Right ventricle myocardium superior (tissue), 1 donor: ENCODE measurements at regions of chr4 and their contacts with region 1.

Region 1: GRCh38 chr4:55948726-55949474 is at the start of gene CEP135:
- DNase-seq: peak; percentile 96
- ATAC-seq: peak; percentile 99
- total RNA-seq, gene CEP135: 2.8 TPM

Region 2: DNA sequence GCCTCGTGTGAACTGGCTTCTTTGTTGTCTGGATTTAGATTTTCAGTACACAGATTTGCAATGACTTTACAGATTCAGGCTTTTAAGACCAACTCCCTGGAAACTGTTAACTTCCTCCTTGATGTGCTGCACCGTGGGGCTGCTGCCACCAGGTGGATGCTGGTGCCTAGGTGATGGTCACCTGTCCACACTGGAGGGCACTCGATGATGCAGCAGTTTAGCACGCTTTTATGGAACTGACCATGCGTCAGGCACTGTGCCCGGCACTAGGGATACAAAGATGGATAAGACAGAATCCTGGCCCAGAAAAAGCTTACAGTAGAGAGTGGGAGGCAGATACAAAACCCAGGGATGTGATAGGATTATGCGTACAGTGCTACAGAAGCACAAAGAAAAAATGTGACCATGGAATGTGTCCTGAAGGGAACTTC is 180.5 kb after region 1 on chr4:
- intact Hi-C with region 1: no loop called
- DNase-seq: no peak
- ATAC-seq: no peak

Region 3: GRCh38 chr4:56301181-56302076 is 352.5 kb after region 1 on chr4:
- intact Hi-C with region 1: loop called (anchors 5 kb)
- DNase-seq: peak; percentile 61
- ATAC-seq: peak; percentile 94